SK-N-SH (cell line): ENCODE measurements at regions of chr10 and their contacts with region 1.

Region 1: DNA sequence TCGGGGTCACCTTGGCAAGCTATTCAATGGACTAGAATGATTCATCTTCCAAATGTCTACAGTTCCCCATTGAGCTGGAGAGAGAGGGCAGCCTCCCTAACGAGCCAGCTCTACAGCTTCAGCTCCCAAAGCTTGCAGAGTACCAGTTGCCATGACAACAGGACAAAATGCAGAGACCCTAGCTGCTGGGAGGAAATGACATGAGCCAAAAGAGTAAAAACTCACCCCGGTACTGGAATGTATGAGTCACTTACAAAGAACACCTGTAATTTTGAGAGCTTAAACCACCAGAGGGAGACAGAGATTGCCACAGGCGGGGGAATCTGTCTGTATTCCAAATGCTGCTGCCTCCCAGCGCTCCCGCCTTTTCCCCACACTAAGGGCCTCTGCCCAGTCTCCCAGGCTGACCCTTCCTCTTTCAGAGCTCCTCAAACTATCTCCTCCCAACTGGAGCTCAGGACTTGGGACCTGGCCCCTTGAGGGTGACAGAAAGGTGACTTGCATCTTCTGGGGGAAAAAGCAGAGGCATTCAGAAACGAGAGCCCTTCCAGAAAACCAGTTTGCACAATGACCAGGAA is 95.5 kb downstream of the CUL2 start:
- DNase-seq: peak; percentile 72
- H3K4me3 ChIP-seq: no peak overlapping the region
- H3K27ac ChIP-seq: no peak overlapping the region
- H3K4me1 ChIP-seq: no peaks in the 10 kb centered on the region; a peak in 1 of 4 replicates
- H3K27me3 ChIP-seq: no peaks in the 10 kb centered on the region
- CTCF ChIP-seq: peak; percentile 73
- EP300 ChIP-seq: no peak
- RAD21 ChIP-seq: peak; percentile 79

Region 2: DNA sequence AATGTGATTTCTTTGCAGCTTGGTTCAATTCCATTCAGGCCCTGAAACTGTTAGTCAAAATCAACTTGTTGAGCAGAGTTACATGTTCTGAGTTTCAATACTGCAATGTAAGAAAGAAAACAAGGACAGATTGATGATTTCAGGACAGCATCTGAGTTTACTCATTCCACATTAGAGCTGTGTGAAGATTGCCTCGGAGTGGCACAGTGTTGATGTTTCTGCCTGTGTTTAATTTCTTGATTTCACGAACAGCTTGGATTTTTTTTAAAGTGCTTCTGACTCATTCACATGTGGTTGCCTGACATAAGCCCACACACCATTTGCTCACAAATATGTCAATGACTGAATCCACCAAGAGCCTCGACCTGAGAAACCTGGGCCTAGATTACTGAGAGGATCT is 78.3 kb before region 1 on chr10:
- CTCF ChIA-PET with region 1: no interaction called
- POLR2A ChIA-PET with region 1: no interaction called
- DNase-seq: no peak
- H3K4me3 ChIP-seq: no peak overlapping the region
- H3K27ac ChIP-seq: peak overlapping the region in 1 of 2 experiments; percentile 21; a peak in 1 of 4 replicates
- H3K4me1 ChIP-seq: no peaks in the 10 kb centered on the region
- H3K27me3 ChIP-seq: no peaks in the 10 kb centered on the region
- CTCF ChIP-seq: no peak
- EP300 ChIP-seq: no peak
- RAD21 ChIP-seq: no peak

Region 3: GRCh38 chr10:35005868-35006267 is 11.2 kb after region 1 on chr10:
- CTCF ChIA-PET with region 1: interaction called, 12 read pairs
- POLR2A ChIA-PET with region 1: no interaction called
- DNase-seq: no peak
- H3K4me3 ChIP-seq: no peak overlapping the region
- H3K27ac ChIP-seq: peak overlapping the region in 1 of 2 experiments; percentile 36; a peak in 2 of 4 replicates
- H3K4me1 ChIP-seq: no peaks in the 10 kb centered on the region
- H3K27me3 ChIP-seq: no peaks in the 10 kb centered on the region
- CTCF ChIP-seq: no peak
- EP300 ChIP-seq: peak in 1 of 2 experiments; percentile 50; a peak in 1 of 4 replicates
- RAD21 ChIP-seq: no peak

Region 4: DNA sequence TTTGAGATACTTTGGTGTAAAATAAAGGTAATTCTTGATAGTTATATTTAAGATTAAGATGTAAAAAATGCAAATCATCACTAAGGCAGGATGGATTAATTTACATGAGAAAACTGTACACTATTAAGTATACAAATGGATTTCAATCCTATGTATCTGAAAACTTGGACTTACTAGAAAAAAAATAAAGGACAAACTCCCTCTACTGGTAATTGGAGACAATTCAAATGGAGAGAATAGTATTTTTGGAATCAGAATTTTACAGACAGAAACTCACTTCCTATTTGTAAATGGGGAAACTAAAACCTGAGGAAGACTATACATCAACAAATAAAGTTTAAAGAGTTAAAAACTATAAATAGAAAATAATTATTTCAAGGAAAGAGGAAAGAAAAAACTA is 32.9 kb after region 1 on chr10:
- CTCF ChIA-PET with region 1: interaction called, 27 read pairs
- POLR2A ChIA-PET with region 1: no interaction called
- DNase-seq: peak; percentile 32
- H3K4me3 ChIP-seq: no peak overlapping the region
- H3K27ac ChIP-seq: peak overlapping the region in 1 of 2 experiments; percentile 31; a peak in 1 of 4 replicates
- H3K4me1 ChIP-seq: no peaks in the 10 kb centered on the region; a peak in 1 of 4 replicates
- H3K27me3 ChIP-seq: no peaks in the 10 kb centered on the region
- CTCF ChIP-seq: peak; percentile 73
- EP300 ChIP-seq: no peak
- RAD21 ChIP-seq: peak; percentile 49